Mammary epithelial cell (primary cell): ENCODE measurements at regions of chr14 and their contacts with region 1.

Region 1: DNA sequence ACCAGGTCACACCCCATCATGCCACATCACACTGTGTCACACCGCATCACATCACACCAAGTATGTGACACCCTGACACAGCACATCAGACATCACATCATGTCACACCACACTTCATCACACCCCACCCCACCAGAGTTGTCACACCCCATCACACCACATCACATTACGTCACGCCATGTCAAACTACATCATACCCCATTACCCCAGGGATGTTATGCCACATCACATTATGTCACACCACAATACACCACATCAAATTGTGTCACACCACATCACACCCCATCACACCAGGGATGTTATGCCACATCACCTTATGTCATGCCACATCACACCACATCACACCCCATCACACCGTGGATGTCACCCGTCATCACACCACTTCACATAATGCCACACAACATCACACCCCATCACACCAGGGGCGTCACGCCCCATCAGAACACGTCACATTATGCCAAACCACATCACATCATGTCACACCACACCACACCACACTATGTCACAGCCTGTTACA is 133.6 kb downstream of the TMEM121 start:
- DNase-seq: no peak
- H3K4me3 ChIP-seq: no peak overlapping the region
- H3K27ac ChIP-seq: no peak overlapping the region
- H3K4me1 ChIP-seq: no peaks in the 10 kb centered on the region
- H3K27me3 ChIP-seq: no peaks in the 10 kb centered on the region
- CTCF ChIP-seq: no peak

Region 2: DNA sequence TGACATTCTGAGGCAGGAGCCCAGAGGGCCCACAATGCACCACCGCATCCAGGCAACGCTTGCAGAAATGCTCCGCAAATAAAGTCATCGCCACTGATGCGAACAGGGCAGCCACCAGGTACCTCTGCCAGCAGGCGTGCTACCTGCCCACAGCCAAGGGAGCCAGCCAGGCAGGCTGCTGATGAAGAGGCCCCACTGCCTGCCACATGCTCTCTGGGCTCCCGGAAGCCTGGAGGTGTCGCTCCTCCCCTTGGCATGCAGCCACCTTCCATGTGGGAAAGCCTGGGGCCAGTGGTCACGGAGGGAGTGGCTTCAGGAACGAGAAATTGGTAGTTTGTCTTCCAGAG is 609.5 kb before region 1 on chr14:
- CTCF ChIA-PET with region 1: no interaction called
- dilution Hi-C with region 1: no loop called
- in situ Hi-C with region 1: no loop called
- intact Hi-C with region 1: no loop called
- DNase-seq: peak; percentile 65
- H3K4me3 ChIP-seq: no peak overlapping the region
- H3K27ac ChIP-seq: no peak overlapping the region
- H3K4me1 ChIP-seq: peaks cover 10% of the 10 kb centered on the region
- H3K27me3 ChIP-seq: peaks cover 1% of the 10 kb centered on the region
- CTCF ChIP-seq: no peak

Region 3: GRCh38 chr14:105602799-105603793 is 56.9 kb before region 1 on chr14:
- CTCF ChIA-PET with region 1: no interaction called
- dilution Hi-C with region 1: no loop called
- in situ Hi-C with region 1: loop called in 1 of 2 experiments (anchors 10 kb)
- intact Hi-C with region 1: no loop called
- DNase-seq: no peak
- H3K4me3 ChIP-seq: no peak overlapping the region
- H3K27ac ChIP-seq: no peak overlapping the region
- H3K4me1 ChIP-seq: no peaks in the 10 kb centered on the region
- H3K27me3 ChIP-seq: no peaks in the 10 kb centered on the region
- CTCF ChIP-seq: no peak

Region 4: DNA sequence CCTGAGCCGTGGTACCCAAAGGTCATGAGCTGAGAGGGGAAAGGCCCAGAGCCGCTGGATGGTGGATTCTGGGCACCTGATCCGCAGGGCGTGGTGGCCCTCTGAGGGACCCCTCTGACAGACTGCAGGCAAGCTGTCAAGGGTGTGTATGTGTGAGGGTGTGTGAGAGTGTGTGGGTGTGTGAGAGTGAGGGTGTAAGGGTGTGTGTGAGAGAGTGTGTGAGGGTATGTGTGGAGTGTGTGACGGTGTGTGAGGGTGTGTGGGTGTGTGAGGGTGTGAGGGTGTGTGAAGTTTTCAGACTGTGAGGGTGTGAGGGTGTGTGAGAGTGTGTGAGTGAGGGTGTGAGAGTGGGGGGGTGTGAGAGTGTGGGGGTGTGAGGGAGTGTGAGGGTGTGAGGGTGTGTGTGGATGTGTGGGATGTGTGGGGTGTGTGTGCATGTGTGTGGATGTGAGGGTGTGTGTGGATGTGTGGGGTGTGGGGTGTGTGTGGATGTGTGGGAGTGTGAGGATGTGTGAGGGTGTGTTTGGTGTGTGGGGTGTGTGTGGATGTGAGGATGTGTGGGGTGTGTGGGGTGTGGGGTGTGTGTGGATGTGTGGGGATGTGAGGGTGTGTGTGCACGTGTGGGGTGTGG is 23.0 kb after region 1 on chr14:
- CTCF ChIA-PET with region 1: no interaction called
- dilution Hi-C with region 1: no loop called
- in situ Hi-C with region 1: no loop called
- intact Hi-C with region 1: no loop called
- DNase-seq: no peak
- H3K4me3 ChIP-seq: no peak overlapping the region
- H3K27ac ChIP-seq: no peak overlapping the region
- H3K4me1 ChIP-seq: no peaks in the 10 kb centered on the region
- H3K27me3 ChIP-seq: no peaks in the 10 kb centered on the region
- CTCF ChIP-seq: no peak

Region 5: DNA sequence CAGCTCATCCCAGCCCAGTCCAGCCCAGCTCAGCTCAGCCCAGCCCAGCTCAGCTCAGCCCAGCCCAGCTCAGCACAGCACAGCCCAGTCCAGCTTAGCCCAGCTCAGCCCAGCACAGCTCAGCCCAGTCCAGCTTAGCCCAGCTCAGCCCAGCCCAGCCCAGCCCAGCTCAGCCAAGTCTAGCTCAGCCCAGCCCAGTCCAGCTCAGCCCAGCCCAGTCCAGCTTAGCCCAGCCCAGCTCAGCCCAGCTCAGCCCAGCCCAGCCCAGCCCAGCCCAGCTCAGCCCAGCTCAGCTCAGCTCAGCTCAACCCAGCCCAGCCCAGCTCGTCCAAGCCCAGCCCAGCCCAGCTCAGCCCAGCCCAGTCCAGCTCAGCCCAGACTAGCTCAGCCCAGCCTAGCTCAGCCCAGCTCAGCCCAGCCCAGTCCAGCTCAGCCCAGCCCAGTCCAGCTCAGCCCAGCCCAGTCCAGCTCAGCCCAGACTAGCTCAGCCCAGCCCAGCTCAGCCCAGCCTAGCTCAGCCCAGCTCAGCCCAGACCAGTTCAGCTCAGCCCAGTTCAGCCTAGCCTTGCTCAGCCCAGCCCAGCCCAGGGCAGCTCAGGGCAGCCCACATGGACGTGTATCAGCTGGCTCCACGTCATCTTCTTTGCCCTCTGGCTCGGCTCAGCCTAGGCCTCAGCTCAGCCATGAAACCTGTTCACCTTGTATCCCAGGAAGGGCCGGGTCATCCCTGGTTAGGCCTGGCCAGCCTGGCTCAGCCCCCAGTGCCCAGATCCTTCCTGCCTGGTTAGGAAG is 51.9 kb after region 1 on chr14:
- CTCF ChIA-PET with region 1: no interaction called
- dilution Hi-C with region 1: no loop called
- in situ Hi-C with region 1: no loop called
- intact Hi-C with region 1: no loop called
- DNase-seq: no peak
- H3K4me3 ChIP-seq: no peak overlapping the region
- H3K27ac ChIP-seq: no peak overlapping the region
- H3K4me1 ChIP-seq: no peaks in the 10 kb centered on the region
- H3K27me3 ChIP-seq: no peaks in the 10 kb centered on the region
- CTCF ChIP-seq: no peak